GM12878 (cell line): ENCODE measurements at regions of chr3 and their contacts with region 1.

Region 1: GRCh38 chr3:68876112-68876713 is 56.1 kb downstream of the TAFA4 start:
- DNase-seq: peak; percentile 17
- ATAC-seq: peak; percentile 91
- H3K4me3 ChIP-seq: no peak overlapping the region
- H3K27ac ChIP-seq: no peak overlapping the region
- H3K4me1 ChIP-seq: no peaks in the 10 kb centered on the region
- H3K27me3 ChIP-seq: peaks cover 0 to 3% of the 10 kb centered on the region in 2 experiments; a peak in 1 of 4 replicates
- CTCF ChIP-seq: peak; percentile 80 to 87 (median 82)
- EP300 ChIP-seq: no peak
- POLR2A ChIP-seq: no peak
- RAD21 ChIP-seq: peak; percentile 92

Region 2: GRCh38 chr3:66948041-66948440 is 1928.2 kb before region 1 on chr3:
- CTCF ChIA-PET with region 1: no interaction called
- POLR2A ChIA-PET with region 1: no interaction called
- RAD21 ChIA-PET with region 1: no interaction called
- SMC1A ChIA-PET with region 1: no interaction called
- in situ Hi-C with region 1: loop called (anchors 10 kb)
- intact Hi-C with region 1: loop called (anchors 10 kb)
- DNase-seq: no peak
- ATAC-seq: no peak
- H3K4me3 ChIP-seq: no peak overlapping the region
- H3K27ac ChIP-seq: no peak overlapping the region
- H3K4me1 ChIP-seq: no peaks in the 10 kb centered on the region
- H3K27me3 ChIP-seq: no peaks in the 10 kb centered on the region; a peak in 1 of 4 replicates
- CTCF ChIP-seq: no peak
- EP300 ChIP-seq: no peak
- POLR2A ChIP-seq: no peak
- RAD21 ChIP-seq: no peak

Region 3: GRCh38 chr3:67377299-67377698 is 1498.9 kb before region 1 on chr3:
- CTCF ChIA-PET with region 1: interaction called, 38 read pairs
- POLR2A ChIA-PET with region 1: no interaction called
- RAD21 ChIA-PET with region 1: interaction called, 4 read pairs
- SMC1A ChIA-PET with region 1: interaction called, 3 read pairs
- in situ Hi-C with region 1: loop called (anchors 10 kb)
- intact Hi-C with region 1: no loop called
- DNase-seq: no peak
- ATAC-seq: 0 out of 3 replicates have a peak, but pooled peaks have one; percentile 28
- H3K4me3 ChIP-seq: no peak overlapping the region
- H3K27ac ChIP-seq: no peak overlapping the region
- H3K4me1 ChIP-seq: no peaks in the 10 kb centered on the region
- H3K27me3 ChIP-seq: no peaks in the 10 kb centered on the region
- CTCF ChIP-seq: no peak
- EP300 ChIP-seq: no peak
- POLR2A ChIP-seq: no peak
- RAD21 ChIP-seq: no peak

Region 4: DNA sequence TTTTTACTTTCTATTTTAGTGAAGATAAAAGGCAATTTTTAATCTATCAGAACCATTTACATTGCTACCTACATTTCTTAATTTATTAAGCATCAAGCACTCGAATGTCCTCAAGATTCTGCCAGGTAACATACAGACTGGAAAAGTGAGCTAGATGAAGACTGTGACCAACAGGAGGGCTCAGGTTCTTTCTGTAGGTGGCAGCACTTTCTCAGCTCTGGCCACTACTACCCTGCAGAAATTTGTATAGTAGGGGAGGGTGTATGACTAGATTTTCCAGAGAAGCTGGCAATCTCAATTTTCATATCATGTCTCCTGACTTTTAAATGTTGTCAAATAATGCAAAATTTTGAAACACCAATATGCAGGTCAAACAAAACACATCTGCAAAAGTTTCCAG is 1056.8 kb before region 1 on chr3:
- CTCF ChIA-PET with region 1: interaction called, 4 read pairs
- POLR2A ChIA-PET with region 1: no interaction called
- RAD21 ChIA-PET with region 1: no interaction called
- SMC1A ChIA-PET with region 1: interaction called, 4 read pairs
- in situ Hi-C with region 1: no loop called
- intact Hi-C with region 1: loop called (anchors 10 kb)
- DNase-seq: no peak
- ATAC-seq: peak; percentile 52; the same call in 2 of the 3 replicates
- H3K4me3 ChIP-seq: no peak overlapping the region
- H3K27ac ChIP-seq: no peak overlapping the region
- H3K4me1 ChIP-seq: no peaks in the 10 kb centered on the region
- H3K27me3 ChIP-seq: no peaks in the 10 kb centered on the region
- CTCF ChIP-seq: peak; percentile 3 to 33 (median 30); a peak in 2 of 6 replicates
- EP300 ChIP-seq: no peak
- POLR2A ChIP-seq: no peak
- RAD21 ChIP-seq: peak; percentile 18; the same call in 1 of the 2 replicates

Region 5: DNA sequence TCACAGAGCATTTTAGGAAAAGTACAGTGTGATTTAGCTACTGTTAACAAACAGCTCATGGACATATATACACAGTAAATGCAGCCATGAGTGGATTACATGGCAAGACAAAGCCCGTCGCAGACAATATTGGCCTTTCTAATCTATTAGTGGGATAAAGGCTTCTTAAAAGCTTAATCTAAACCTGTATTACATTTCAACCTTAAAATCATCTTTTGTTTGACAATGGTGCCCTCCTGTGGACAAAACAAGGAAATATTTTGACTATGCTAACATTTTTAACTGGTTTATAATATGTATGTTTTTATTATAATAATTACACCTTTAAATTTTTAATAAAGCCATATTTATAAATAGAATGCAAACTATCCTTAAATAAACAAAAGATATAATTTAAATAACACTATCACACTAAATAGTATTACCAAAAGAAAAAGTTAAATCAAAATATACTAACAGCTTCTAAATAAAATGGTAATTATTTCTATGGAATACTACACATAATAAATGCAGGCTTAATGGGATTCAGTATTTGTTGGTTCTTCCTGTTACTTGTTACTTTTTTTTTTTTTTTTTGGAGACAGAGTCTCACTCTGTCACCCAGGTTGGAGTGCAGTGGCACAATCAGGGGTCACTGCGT is 17.5 kb after region 1 on chr3:
- CTCF ChIA-PET with region 1: interaction called, 35 read pairs
- POLR2A ChIA-PET with region 1: no interaction called
- RAD21 ChIA-PET with region 1: interaction called, 6 read pairs
- SMC1A ChIA-PET with region 1: interaction called, 6 read pairs
- in situ Hi-C with region 1: no loop called
- intact Hi-C with region 1: no loop called
- DNase-seq: no peak
- ATAC-seq: no peak
- H3K4me3 ChIP-seq: no peak overlapping the region
- H3K27ac ChIP-seq: no peak overlapping the region
- H3K4me1 ChIP-seq: no peaks in the 10 kb centered on the region
- H3K27me3 ChIP-seq: no peaks in the 10 kb centered on the region
- CTCF ChIP-seq: peak; percentile 13 to 53 (median 47); a peak in 3 of 6 replicates
- EP300 ChIP-seq: no peak
- POLR2A ChIP-seq: no peak
- RAD21 ChIP-seq: peak; percentile 54

Region 6: GRCh38 chr3:69013253-69014021 is 137.2 kb after region 1 on chr3 and contains the start of gene EOGT:
- CTCF ChIA-PET with region 1: no interaction called
- POLR2A ChIA-PET with region 1: no interaction called
- RAD21 ChIA-PET with region 1: no interaction called
- SMC1A ChIA-PET with region 1: no interaction called
- in situ Hi-C with region 1: no loop called
- intact Hi-C with region 1: no loop called
- DNase-seq: peak; percentile 15
- ATAC-seq: peak; percentile 86
- H3K4me3 ChIP-seq: peak within 1 kb of the TSS; percentile 87
- H3K27ac ChIP-seq: peak within 1 kb of the TSS; percentile 64
- H3K4me1 ChIP-seq: peaks cover 7% of the 10 kb centered on the region; the same call in 1 of the 2 replicates
- H3K27me3 ChIP-seq: no peaks in the 10 kb centered on the region
- CTCF ChIP-seq: peak; percentile 43 to 80 (median 71)
- EP300 ChIP-seq: no peak
- POLR2A ChIP-seq: peak; percentile 82
- RAD21 ChIP-seq: 0 out of 2 replicates have a peak, but pooled peaks have one; percentile 9
- polyA plus RNA-seq, gene EOGT: 3.5 to 4.3 TPM